AG04449 (cell line): ENCODE measurements at regions of chr5 and their contacts with region 1.

Region 1: GRCh38 chr5:74212336-74212735 is 428.2 kb downstream of the ENC1 start:
- DNase-seq: no peak
- H3K4me3 ChIP-seq: no peak overlapping the region
- CTCF ChIP-seq: peak; percentile 31

Region 2: DNA sequence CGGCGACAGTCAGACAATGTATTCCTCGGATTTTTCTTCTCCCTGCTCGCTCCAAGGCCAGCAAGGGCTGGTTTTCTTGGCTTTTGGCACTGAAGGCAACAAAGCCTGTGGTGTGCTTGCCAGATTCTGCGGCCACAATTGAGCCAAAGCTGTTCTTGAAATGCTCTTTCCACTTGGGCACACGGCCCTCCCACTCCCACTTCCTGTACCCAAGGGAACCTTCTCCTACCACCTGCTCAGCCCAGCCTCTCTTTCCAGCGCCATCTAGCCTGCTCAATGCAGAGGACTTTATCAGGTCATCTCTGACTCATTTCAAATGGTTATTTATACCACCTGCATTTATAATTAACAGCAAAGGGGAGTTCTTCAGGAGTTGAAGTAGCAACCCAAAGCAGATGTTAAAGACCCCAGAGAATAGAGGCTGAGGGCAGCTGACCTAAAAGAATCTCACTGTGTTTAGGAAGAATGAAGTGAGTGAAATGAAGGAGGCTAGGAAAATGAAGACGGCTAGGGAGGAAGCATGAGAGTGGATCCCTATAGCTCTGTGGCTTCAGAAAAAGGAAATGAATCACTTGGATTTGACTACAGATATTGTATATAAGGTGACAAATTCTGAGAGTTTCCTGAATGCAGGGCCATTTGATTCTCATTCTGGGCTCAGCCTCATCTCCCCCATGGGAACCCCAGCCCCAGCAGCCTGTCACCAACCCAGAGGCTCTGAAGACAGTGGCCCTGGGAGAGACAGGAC is 10.8 kb before region 1 on chr5:
- CTCF ChIA-PET with region 1: interaction called, 11 read pairs
- POLR2A ChIA-PET with region 1: no interaction called
- DNase-seq: no peak
- H3K4me3 ChIP-seq: no peak overlapping the region
- CTCF ChIP-seq: no peak